A549 (cell line): ENCODE measurements at regions of chr15 and their contacts with region 1.

Region 1: GRCh38 chr15:73240866-73241499 is 127.8 kb downstream of the HCN4 start:
- DNase-seq: peak; percentile 78
- ATAC-seq: peak; percentile 80 to 86; a peak in 5 of 6 replicates
- H3K4me3 ChIP-seq: no peak overlapping the region
- H3K27ac ChIP-seq: no peak overlapping the region
- H3K4me1 ChIP-seq: no peaks in the 10 kb centered on the region
- CTCF ChIP-seq: peak; percentile 98
- EP300 ChIP-seq: no peak
- POLR2A ChIP-seq: no peak
- RAD21 ChIP-seq: peak; percentile 72 to 76

Region 2: DNA sequence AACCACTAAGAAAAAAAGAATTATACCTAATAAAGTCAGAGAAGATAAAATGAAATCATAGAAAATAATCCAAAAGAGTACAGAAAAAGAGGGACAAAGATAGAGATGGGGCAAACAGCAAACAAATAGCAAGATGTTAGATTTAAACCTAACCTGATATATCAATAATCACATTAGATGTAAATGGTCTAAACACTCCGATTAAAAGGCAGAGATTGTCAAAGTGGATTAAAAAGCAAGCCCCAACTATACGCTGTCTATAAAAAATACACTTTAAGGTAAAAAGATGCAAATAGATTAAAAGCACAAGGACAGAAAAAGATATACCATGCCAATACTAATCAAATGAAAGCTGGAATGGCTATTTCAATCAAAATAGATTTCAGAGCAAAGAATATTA is 474.2 kb before region 1 on chr15:
- CTCF ChIA-PET with region 1: no interaction called
- POLR2A ChIA-PET with region 1: no interaction called
- DNase-seq: no peak
- ATAC-seq: no peak
- H3K4me3 ChIP-seq: no peak overlapping the region
- H3K27ac ChIP-seq: no peak overlapping the region
- H3K4me1 ChIP-seq: no peaks in the 10 kb centered on the region
- CTCF ChIP-seq: no peak
- EP300 ChIP-seq: no peak
- POLR2A ChIP-seq: no peak
- RAD21 ChIP-seq: no peak

Region 3: DNA sequence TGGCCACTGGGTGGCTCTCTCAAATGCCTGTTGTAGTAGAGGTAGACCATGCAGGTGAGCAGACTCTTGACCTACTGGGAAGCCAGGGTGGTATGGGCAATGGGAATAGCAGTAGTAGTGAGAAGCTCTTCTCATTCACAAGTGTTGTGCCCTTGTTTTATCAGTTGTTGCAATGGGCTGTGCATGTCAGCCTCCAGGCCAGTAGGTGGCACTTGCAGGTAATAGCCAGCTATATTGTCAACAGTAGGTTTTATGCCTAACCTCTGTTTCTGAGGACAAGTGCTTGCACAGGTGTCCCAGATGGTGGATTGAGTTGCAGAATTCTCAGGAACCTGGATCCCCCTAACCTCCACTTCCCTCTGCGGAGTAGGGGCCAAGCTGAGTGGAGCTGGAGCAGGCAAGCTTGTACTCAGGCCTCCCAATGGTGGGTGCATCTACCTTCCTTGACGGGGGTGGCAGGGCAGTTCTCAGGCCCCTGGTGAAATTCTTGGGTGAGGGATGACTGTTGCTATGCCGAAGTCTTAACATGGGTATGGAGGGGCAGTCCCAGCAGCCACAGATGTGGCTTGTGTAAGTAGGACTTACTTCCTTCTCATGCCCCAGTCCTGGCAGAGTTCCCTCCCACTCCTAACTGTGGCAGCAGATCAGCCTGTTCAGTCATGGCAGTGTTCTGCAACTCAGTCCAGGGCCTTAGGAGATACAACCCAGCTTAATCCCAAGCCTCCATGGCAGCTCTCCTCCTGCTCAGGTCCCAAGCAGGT is 84.4 kb before region 1 on chr15:
- CTCF ChIA-PET with region 1: no interaction called
- POLR2A ChIA-PET with region 1: no interaction called
- DNase-seq: no peak
- ATAC-seq: no peak
- H3K4me3 ChIP-seq: no peak overlapping the region
- H3K27ac ChIP-seq: no peak overlapping the region
- H3K4me1 ChIP-seq: no peaks in the 10 kb centered on the region
- CTCF ChIP-seq: no peak
- EP300 ChIP-seq: no peak
- POLR2A ChIP-seq: no peak
- RAD21 ChIP-seq: no peak

Region 4: GRCh38 chr15:73225358-73226015 is 15.5 kb before region 1 on chr15:
- CTCF ChIA-PET with region 1: interaction called, 16 read pairs
- POLR2A ChIA-PET with region 1: no interaction called
- DNase-seq: peak in 1 of 2 experiments; percentile 23
- ATAC-seq: no peak
- H3K4me3 ChIP-seq: no peak overlapping the region
- H3K27ac ChIP-seq: peak overlapping the region; percentile 27 to 71; a peak in 5 of 6 replicates
- H3K4me1 ChIP-seq: peaks cover 8% of the 10 kb centered on the region; the same call in 1 of the 3 replicates
- CTCF ChIP-seq: no peak
- EP300 ChIP-seq: no peak
- POLR2A ChIP-seq: no peak
- RAD21 ChIP-seq: no peak

Region 5: DNA sequence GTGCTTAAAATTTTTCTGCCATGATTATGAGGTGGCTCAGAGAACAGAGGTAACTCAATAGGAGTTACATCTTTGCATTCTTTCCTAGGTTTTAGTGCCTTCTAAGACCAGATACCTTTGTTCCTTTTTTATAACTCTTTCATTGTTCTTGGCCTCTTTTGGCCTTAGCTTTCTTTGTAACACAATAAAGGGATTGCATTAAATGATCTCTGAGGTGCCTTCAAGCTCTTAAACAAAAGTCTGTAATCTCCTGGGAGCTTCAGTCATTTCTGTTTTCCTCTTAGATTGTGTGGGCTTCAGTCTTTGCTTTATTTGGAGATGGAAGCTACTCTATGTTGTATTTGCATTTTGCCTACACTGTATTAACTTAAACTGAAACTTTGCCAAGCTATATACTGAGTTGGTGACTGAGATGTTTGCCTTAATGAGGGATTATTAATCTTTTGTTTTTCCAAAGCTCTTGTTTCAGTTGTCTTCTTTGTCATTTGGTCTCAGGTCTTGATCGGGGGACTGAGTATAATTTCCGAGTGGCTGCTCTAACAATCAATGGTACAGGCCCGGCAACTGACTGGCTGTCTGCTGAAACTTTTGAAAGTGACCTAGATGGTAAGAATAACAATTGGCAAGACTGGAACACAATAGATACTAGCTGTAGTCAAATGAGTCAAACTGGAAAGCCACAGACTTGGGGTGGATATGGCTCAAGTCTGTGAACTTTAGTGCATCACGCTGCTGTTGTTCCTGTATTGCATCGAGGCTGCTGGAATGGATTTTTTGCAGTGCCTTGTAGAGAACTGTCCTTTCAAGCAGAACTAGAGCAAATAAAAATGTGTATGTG is 17.5 kb after region 1 on chr15:
- CTCF ChIA-PET with region 1: interaction called, 78 read pairs
- POLR2A ChIA-PET with region 1: interaction called, 3 read pairs
- DNase-seq: no peak
- ATAC-seq: no peak
- H3K4me3 ChIP-seq: no peak overlapping the region
- H3K27ac ChIP-seq: no peak overlapping the region
- H3K4me1 ChIP-seq: no peaks in the 10 kb centered on the region
- CTCF ChIP-seq: no peak
- EP300 ChIP-seq: no peak
- POLR2A ChIP-seq: no peak
- RAD21 ChIP-seq: no peak

Region 6: DNA sequence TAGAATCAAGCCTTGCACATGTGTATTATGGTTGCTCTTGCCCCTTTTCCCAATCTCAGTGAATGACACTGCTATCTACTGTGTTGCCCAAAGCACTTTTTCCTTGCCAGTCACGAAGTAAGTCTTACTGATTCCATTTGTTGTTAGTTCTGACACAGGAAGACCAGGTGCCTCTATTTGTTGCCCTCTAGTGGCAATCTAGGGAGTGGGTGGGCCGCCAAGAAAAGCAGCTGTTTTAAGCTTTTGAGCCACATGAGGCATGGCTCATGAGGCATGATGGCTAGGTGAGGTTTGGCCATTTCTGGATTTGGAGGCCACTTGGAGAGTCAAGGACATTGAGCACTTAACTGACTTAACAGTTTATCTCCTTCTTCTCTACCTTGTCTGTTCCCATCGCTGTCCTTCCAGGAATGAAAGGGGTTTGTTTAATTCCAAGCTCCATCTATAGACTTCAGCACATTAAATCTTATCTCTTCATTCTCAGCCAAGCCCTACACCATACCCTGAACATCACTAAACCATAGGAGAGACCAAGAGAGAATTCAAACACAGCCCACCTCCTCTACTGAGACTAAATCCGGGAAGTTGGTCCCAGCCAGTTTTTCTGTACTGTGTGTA is 24.7 kb after region 1 on chr15:
- CTCF ChIA-PET with region 1: interaction called, 27 read pairs
- POLR2A ChIA-PET with region 1: no interaction called
- DNase-seq: peak; percentile 66 to 74
- ATAC-seq: peak; percentile 97 to 98
- H3K4me3 ChIP-seq: no peak overlapping the region
- H3K27ac ChIP-seq: no peak overlapping the region
- H3K4me1 ChIP-seq: peaks cover 6% of the 10 kb centered on the region; the same call in 1 of the 3 replicates
- CTCF ChIP-seq: peak; percentile 75
- EP300 ChIP-seq: no peak
- POLR2A ChIP-seq: no peak
- RAD21 ChIP-seq: peak; percentile 42 to 55

Region 7: DNA sequence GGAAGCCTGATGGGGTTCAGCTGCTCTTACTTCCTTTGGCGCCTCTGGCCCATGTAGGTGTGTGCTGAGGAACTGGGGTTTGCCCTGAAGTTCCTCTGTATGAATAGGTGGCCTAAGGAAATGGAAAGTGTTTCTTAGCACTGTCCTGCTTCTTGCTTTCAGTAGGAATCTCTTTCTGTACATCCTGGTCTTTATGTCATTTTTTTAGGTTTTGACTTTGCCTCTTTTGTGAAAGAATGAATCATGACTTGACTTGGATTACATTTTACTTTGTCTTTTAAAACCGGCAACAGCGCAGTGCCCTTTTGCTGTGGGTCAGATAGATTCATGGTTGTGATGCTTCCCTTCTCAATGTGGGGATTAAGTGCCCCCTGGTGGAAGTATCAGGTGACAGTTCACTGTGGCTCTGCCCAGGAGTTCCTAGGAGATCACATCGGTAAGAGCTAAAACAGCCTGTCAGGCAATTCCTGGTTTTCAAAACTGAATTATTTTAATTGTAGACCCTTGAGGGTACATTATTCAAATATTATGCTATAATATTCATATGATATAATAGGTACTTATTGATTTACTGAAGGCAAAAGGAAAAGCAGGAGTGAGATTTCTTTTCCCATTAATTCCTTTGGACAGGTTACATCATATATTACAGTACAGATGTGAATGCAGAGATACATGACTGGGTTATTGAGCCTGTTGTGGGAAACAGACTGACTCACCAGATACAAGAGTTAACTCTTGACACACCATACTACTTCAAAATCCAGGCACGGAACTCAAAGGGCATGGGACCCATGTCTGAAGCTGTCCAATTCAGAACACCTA is 32.4 kb after region 1 on chr15:
- CTCF ChIA-PET with region 1: interaction called, 40 read pairs
- POLR2A ChIA-PET with region 1: no interaction called
- DNase-seq: peak; percentile 68 to 69
- ATAC-seq: peak; percentile 99 to 100
- H3K4me3 ChIP-seq: no peak overlapping the region
- H3K27ac ChIP-seq: no peak overlapping the region
- H3K4me1 ChIP-seq: peaks cover 9% of the 10 kb centered on the region; the same call in 1 of the 3 replicates
- CTCF ChIP-seq: peak; percentile 90
- EP300 ChIP-seq: no peak
- POLR2A ChIP-seq: no peak
- RAD21 ChIP-seq: peak; percentile 77 to 80

Region 8: GRCh38 chr15:73284090-73284716 is 43.2 kb after region 1 on chr15:
- CTCF ChIA-PET with region 1: interaction called, 11 read pairs
- POLR2A ChIA-PET with region 1: no interaction called
- DNase-seq: peak in 1 of 2 experiments; percentile 17
- ATAC-seq: peak; percentile 57; a peak in 4 of 6 replicates
- H3K4me3 ChIP-seq: no peak overlapping the region
- H3K27ac ChIP-seq: no peak overlapping the region
- H3K4me1 ChIP-seq: no peaks in the 10 kb centered on the region
- CTCF ChIP-seq: peak; percentile 37
- EP300 ChIP-seq: no peak
- POLR2A ChIP-seq: no peak
- RAD21 ChIP-seq: peak; percentile 52 to 58

Region 9: DNA sequence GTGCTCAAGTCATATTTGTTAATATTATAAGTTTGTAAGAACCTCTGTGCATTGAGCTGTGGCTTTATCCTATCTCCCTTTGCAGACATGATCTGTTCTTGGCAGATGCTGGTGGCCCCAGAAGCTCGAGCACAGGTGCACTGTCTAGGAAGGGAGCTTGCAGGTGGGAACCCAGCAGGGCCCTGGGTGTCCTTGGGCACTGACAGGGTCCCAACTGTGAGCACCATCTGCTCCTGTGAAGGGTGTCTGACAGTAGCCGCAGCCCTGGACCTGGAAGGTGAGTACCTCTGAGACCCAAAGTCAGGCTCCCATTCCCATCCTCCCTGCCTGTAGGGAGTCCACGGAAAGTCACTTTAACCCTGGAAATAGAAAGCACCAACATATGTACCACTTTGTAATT is 199.6 kb after region 1 on chr15:
- CTCF ChIA-PET with region 1: no interaction called
- POLR2A ChIA-PET with region 1: no interaction called
- DNase-seq: no peak
- ATAC-seq: no peak; a peak in 1 of 6 replicates
- H3K4me3 ChIP-seq: no peak overlapping the region
- H3K27ac ChIP-seq: no peak overlapping the region
- H3K4me1 ChIP-seq: no peaks in the 10 kb centered on the region
- CTCF ChIP-seq: no peak
- EP300 ChIP-seq: no peak
- POLR2A ChIP-seq: no peak
- RAD21 ChIP-seq: no peak

Region 10: DNA sequence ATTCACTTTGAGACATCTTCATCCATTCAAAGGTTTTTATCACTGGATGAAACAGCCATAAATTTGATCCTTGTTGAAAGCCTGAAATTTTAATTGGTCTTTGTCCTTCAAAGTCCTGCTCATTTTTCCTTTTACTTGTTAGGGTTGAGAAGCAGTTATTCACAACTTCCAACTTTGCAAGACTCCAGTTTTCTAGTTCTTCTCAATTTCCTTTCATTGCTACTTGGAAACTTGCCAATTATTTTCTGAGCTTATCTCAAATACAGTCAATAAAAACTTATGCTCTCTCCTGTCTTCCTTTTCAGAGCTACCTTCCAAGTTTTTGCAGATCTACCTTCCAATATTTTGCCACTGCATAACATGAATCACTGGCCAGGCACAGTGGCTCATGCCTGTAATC is 419.5 kb after region 1 on chr15:
- CTCF ChIA-PET with region 1: no interaction called
- POLR2A ChIA-PET with region 1: no interaction called
- DNase-seq: no peak
- ATAC-seq: no peak
- H3K4me3 ChIP-seq: no peak overlapping the region
- H3K27ac ChIP-seq: no peak overlapping the region
- H3K4me1 ChIP-seq: no peaks in the 10 kb centered on the region
- CTCF ChIP-seq: no peak
- EP300 ChIP-seq: no peak
- POLR2A ChIP-seq: no peak
- RAD21 ChIP-seq: no peak